Activated T-helper 1 cell treated with anti-CD3 and anti-CD28 coated beads, Interleukin-12 subunit alpha, Interleukin-12 subunit beta, Interleukin-2, Interleukin-4 antibody, amounts not matched to agents 30 ng/mL and 10 ng/mL and 1 ng/mL, durations not matched to agents 14 hours and 24 hours and 36 hours (primary cell): ENCODE measurements at regions of chr10 and their contacts with region 1.

Region 1: DNA sequence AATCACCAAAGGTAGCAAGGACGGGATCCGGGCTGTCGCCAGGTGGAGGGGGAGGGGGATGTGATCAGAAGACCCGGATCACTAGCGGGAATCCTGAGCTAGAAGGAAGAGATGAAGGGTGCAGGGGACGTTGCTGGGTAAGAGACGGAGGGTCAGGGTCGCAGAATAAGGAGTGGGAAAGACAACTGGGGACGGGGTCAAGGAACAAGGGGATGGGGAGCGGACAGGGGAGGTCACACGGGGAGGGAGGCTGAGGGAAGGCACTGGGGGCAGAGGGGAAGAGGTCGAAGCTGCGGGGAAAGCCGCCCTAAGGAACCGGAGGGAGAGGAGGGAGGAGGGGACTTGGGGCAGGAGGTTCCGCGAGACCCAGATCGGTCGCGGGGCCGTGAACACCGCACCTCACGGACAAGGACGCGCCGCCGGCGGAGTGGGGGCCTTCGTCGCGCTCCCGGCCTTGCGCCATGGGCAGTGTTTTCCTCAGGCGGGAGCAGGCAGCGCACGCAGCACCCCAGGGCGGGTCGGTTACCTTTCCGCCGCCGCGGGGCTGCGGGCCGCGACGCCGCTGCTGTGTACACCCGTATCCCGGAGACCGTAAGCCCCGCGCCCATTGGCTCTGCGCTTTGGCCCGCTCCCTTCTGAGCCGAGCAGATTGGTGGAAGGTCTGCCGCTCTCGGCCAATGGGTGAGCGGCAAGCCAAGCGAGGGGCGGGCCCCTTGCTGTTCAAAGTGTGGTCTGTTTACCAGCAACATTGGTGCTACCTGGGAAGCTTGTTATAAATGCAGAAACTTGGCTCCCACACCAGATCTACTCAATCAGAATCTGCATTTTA is at the start of gene CFAP43:
- DNase-seq: peak; percentile 99
- H3K4me3 Mint-ChIP-seq: peak within 1 kb of the TSS; percentile 82
- H3K27ac Mint-ChIP-seq: peak within 1 kb of the TSS; percentile 63
- H3K4me1 Mint-ChIP-seq: peaks cover 12% of the 10 kb centered on the region
- H3K27me3 Mint-ChIP-seq: peaks cover 33% of the 10 kb centered on the region
- total RNA-seq, gene CFAP43: not detected in 2 replicates

Region 2: DNA sequence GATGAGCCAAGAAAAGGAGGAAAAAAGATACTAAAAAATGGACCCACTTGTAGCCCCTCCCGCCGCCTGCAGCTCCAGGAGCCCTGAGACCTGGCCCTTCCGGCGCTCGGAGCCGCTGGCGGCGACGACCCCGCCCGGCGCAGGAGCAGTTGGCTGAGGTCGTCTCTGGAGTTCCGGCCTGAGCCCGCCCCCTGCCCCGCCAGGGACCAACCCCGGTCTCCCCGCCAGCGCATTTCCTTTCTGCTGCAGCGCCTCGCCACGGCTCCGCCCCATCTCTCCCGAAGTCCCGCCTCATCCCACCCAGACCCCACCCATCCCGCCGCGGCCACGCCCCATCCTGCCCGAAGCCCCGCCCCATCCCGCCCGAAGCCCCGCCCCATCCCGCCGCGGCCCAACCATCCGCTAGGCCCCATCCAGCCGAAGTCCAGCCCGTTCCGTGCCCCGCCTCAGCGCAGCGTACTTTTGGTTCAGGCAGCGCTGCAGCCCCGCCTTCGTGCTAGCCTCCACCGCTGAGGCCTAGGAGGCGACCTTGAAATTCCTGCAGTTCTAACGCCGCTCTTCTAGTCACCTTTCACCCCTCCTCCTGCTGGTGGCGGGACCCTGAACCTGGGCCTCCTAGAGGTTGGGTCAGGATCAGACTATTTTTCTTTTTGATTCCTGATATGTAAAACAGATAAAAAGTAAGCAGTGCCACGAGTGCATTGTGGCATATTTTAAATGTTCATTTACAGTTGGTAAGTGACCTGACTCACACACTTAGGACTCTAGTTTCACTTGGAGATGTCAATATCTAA is 313.7 kb before region 1 on chr10 and contains the start of gene STN1:
- intact Hi-C with region 1: loop called (anchors 1 kb)
- DNase-seq: peak; percentile 94
- H3K4me3 Mint-ChIP-seq: peak within 1 kb of the TSS; percentile 93
- H3K27ac Mint-ChIP-seq: peak within 1 kb of the TSS; percentile 94
- H3K4me1 Mint-ChIP-seq: peaks cover 36% of the 10 kb centered on the region
- H3K27me3 Mint-ChIP-seq: no peaks in the 10 kb centered on the region
- total RNA-seq, gene STN1: 19.4 and 20.0 TPM in 2 replicates

Region 3: DNA sequence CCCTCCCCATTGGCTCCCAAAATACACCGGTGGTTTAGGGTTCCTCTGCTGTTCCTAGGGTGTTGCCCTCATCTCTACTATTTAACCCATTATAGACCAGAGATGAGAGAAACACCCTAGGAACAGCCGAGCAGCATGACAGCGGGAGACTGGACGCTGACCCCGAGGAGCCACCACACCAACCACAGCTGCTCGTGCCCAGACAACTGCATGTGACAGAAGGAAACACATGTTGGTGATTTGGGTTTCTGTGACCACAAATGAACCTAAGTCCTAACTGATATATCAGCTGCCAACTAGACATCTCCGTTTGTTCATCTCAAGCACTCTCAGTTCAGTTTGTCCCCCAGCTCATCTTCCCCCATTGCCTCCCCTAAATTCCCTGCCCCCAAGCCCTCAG is 13.2 kb before region 1 on chr10:
- intact Hi-C with region 1: no loop called
- DNase-seq: no peak
- H3K4me3 Mint-ChIP-seq: no peak overlapping the region
- H3K27ac Mint-ChIP-seq: no peak overlapping the region
- H3K4me1 Mint-ChIP-seq: no peaks in the 10 kb centered on the region
- H3K27me3 Mint-ChIP-seq: peaks cover 18% of the 10 kb centered on the region

Region 4: DNA sequence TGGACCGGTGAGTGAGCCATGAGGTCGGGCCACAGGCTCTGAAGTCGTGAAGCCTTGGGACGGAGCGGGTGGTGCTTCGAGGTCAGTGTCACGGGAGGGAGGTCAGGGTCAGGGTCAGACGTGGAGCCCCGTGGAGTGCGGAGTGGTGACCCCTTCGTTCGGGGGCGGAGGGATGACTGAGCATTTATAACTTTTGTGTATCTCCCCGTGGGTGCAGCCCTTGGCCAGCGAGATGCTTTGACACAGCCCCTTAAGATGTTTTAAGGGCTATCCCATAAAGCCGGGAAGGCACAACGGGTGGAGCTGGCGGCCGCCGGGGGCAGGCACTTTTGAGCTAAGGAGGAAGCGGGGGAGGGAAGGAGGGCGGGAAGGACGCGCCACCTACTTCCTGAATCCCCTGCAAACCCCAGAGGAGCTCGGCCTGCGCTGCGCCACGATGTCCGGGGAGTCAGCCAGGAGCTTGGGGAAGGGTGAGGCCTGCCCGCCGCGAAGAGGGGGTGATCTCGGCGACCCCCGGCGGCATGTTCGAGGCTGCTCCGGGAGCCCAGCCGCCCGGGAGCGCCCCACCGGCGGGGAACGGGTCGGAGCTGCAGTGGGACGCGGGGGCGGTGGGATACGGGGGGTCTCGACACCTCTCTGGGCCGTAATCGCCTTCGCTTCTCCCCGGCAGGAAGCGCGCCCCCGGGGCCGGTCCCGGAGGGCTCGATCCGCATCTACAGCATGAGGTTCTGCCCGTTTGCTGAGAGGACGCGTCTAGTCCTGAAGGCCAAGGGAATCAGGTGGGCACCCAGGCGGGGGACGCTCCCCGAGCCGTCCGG is 22.7 kb after region 1 on chr10 and contains the start of gene GSTO1:
- intact Hi-C with region 1: loop called (anchors 1 kb)
- DNase-seq: peak; percentile 39
- H3K4me3 Mint-ChIP-seq: peak within 1 kb of the TSS; percentile 96
- H3K27ac Mint-ChIP-seq: peak within 1 kb of the TSS; percentile 96
- H3K4me1 Mint-ChIP-seq: peaks cover 52% of the 10 kb centered on the region
- H3K27me3 Mint-ChIP-seq: peaks cover 6% of the 10 kb centered on the region
- total RNA-seq, gene GSTO1: 125 TPM in 2 replicates

Region 5: GRCh38 chr10:104337974-104338735 is 106.2 kb after region 1 on chr10 and contains the start of gene ITPRIP:
- intact Hi-C with region 1: loop called (anchors 1 kb)
- DNase-seq: peak; percentile 68
- H3K4me3 Mint-ChIP-seq: peak within 1 kb of the TSS; percentile 100
- H3K27ac Mint-ChIP-seq: peak within 1 kb of the TSS; percentile 100
- H3K4me1 Mint-ChIP-seq: peaks cover 57% of the 10 kb centered on the region
- H3K27me3 Mint-ChIP-seq: peaks cover 5% of the 10 kb centered on the region
- total RNA-seq, gene ITPRIP: 17.3 and 18.1 TPM in 2 replicates

Region 6: GRCh38 chr10:104559935-104560334 is 327.9 kb after region 1 on chr10:
- intact Hi-C with region 1: no loop called
- DNase-seq: no peak
- H3K4me3 Mint-ChIP-seq: no peak overlapping the region
- H3K27ac Mint-ChIP-seq: no peak overlapping the region
- H3K4me1 Mint-ChIP-seq: no peaks in the 10 kb centered on the region
- H3K27me3 Mint-ChIP-seq: peaks cover 9% of the 10 kb centered on the region